Activated CD4-positive, alpha-beta memory T cell treated with anti-CD3 and anti-CD28 coated beads for 36 hours (primary cell): ENCODE measurements at regions of chr6 and their contacts with region 1.

Region 1: DNA sequence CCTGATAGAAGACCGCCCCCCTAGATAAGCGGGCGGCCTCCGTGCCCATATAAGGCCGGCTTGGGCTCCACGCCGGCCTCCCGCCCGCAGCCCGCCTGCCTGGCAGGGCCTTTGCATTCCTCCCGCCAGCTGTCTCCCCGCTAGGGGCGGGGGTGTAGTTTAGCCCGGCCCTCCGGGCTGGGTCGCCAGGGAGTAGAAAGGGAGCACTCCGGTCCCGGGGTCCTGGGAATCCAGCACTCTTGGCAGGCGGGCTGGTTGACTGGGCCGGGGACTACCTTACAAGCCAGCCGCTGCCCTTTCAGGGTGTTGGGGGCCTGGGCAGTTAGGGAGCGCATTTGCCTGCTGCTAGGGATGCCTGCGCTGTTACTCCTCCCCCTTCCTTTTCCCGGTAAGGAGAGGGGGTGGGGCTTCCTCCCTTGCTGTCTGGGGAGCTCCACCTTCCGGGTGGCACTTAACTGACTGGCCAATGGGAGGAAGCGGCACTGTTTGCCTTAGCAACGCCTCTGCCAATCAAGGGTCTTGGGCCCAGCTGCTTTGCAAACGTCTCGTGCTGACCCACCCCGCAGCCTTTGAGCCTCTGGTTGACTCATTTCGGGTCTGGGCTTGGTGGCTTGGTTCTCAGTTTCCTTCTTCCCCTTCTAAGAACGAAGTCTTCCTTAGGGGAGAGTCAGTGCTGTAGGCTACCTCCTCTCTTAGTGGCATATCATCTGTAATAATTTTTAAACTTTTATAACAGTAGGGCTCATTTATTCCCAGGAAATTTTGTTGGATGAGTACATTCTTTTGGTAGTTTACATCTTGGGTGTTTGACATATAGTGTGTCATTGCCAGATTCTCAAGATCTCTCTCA is 3.4 kb downstream of the SRF start:
- DNase-seq: peak; percentile 99
- H3K4me3 Mint-ChIP-seq: peak overlapping the region; percentile 99
- H3K27ac Mint-ChIP-seq: peak overlapping the region; percentile 89
- H3K4me1 Mint-ChIP-seq: peaks cover 43% of the 10 kb centered on the region
- H3K27me3 Mint-ChIP-seq: no peaks in the 10 kb centered on the region

Region 2: DNA sequence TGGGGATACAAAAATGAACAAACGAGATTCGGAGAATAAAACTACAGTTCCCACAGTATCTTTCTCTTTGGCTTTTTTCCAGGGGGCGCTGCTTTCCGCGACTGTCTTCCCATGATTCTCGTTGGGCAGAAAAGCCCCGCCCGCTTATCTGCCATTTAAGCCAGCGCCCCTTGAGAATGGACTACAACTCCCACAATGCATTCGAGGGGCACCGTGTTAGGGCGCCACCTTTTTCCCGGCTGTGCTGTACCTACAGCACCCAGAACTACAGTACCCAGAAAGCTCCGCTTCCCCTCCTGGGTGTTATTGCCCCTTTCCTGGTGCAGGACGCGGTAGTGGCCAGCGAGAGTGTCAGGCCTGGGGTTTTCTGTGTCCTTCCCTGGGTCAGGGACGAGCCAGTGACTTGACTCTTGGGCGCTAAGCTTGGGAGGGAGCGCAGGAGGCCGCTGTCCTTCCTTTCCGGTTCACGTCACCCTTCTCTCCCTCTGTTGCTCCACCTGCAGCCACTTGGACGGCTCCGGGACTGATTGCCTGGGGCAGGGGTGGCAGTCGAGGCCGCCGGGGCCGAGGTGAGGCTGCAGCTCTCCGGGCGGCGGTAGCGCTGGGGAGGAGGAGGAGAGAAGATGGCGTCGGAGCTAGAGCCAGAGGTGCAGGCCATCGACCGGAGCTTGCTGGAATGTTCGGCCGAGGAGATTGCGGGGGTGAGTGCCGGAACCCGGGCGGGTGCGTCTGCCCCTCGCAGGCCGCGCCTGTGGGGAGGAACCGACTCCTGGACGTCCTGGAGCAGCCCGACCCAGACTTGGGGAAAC is 610.6 kb before region 1 on chr6 and contains the start of gene UBR2:
- CTCF ChIA-PET with region 1: no interaction called
- POLR2A ChIA-PET with region 1: no interaction called
- intact Hi-C with region 1: loop called (anchors 5 kb)
- DNase-seq: peak; percentile 96
- H3K4me3 Mint-ChIP-seq: peak within 1 kb of the TSS; percentile 83
- H3K27ac Mint-ChIP-seq: peak within 1 kb of the TSS; percentile 91
- H3K4me1 Mint-ChIP-seq: peaks cover 25% of the 10 kb centered on the region
- H3K27me3 Mint-ChIP-seq: no peaks in the 10 kb centered on the region
- total RNA-seq, gene UBR2: 31.4 to 32.5 TPM

Region 3: DNA sequence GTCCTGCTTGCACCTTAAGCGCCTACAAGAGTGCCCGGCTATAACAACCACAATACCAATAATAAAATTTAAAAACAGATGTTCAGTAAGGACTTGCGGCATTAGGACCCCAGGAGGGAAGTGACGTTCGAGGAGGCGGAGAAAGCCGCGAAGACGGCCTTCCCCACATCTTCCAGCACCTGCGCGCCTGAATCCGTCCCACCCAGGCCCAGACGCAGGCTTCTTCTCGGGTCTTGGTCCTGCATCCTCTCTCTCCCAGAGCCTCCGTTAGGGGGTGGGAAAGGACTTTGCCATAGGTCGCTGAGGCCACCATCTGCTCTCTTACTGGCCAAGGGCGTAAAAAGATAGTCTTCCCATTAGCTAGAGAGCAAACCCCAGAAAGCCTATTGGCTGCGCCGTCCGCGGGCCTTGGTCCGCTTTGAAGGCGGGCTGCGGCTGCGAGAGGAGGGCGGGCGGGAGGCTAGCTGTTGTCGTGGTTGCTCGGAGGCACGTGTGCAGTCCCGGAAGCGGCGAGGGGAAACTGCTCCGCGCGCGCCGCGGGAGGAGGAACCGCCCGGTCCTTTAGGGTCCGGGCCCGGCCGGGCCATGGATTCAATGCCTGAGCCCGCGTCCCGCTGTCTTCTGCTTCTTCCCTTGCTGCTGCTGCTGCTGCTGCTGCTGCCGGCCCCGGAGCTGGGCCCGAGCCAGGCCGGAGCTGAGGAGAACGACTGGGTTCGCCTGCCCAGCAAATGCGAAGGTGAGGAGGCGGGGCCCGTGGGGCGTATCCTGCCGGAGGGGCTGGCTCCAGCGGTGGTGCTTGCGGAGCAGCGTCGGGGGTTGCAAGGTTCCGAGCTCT is 245.3 kb before region 1 on chr6 and contains the start of gene CNPY3:
- CTCF ChIA-PET with region 1: no interaction called
- POLR2A ChIA-PET with region 1: interaction called, 3 read pairs
- intact Hi-C with region 1: loop called (anchors 1 kb)
- DNase-seq: peak; percentile 98
- H3K4me3 Mint-ChIP-seq: peak within 1 kb of the TSS; percentile 96
- H3K27ac Mint-ChIP-seq: peak within 1 kb of the TSS; percentile 99
- H3K4me1 Mint-ChIP-seq: peaks cover 38% of the 10 kb centered on the region
- H3K27me3 Mint-ChIP-seq: no peaks in the 10 kb centered on the region
- total RNA-seq, gene CNPY3: 32.2 to 37.6 TPM

Region 4: DNA sequence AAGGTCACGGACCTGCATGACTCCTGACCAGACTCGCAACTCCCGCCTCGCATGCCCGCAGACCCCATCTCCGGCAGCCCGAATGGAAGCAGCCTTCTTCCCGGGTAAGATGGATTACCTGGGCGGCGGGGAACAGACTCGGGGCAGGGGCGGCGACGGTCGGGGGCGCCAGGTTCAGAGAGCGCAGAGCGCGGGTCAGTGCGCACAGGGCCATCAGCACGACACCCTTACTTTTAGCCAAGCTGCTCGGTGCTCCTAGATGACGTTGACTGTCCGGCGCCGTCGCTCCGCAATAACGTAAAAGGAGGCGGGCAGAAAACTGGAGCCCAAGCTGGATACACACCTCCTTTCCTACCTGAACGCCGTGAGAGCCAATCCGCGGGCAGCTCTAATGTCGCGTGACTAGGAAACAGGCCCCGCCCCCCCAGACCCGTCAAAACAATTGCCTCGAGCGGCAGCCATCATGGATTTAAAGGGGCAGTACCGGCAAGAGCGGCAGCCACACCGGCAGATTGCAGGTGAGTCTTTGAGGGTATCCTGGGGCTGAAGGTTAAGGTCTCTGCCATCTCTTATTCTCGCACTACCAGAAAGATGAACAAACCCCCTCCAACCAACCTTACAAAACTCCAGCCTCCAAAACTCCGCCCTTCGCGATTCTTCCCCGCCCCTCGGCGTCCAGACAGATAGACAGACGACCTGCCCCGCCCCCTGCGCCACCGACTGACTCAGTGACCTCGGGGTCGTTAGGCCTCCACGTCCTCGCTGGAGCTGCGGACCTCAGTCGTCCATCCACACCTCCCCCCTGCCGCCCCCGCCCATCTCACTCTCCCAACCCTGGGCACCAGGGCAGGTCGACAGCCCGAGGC is 115.1 kb before region 1 on chr6 and contains the starts of genes KLC4 and MRPL2:
- CTCF ChIA-PET with region 1: no interaction called
- POLR2A ChIA-PET with region 1: interaction called, 3 read pairs
- intact Hi-C with region 1: loop called (anchors 1 kb)
- DNase-seq: peak; percentile 100
- H3K4me3 Mint-ChIP-seq: peak within 1 kb of the TSS; percentile 89
- H3K27ac Mint-ChIP-seq: peak within 1 kb of the TSS; percentile 95
- H3K4me1 Mint-ChIP-seq: peaks cover 30% of the 10 kb centered on the region
- H3K27me3 Mint-ChIP-seq: no peaks in the 10 kb centered on the region
- total RNA-seq, gene KLC4: 11.0 to 11.9 TPM
- total RNA-seq, gene MRPL2: 91.0 to 95.4 TPM

Region 5: GRCh38 chr6:43105538-43106220 is 68.8 kb before region 1 on chr6:
- CTCF ChIA-PET with region 1: no interaction called
- POLR2A ChIA-PET with region 1: no interaction called
- intact Hi-C with region 1: no loop called
- DNase-seq: no peak
- H3K4me3 Mint-ChIP-seq: no peak overlapping the region
- H3K27ac Mint-ChIP-seq: no peak overlapping the region
- H3K4me1 Mint-ChIP-seq: no peaks in the 10 kb centered on the region
- H3K27me3 Mint-ChIP-seq: no peaks in the 10 kb centered on the region

Region 6: GRCh38 chr6:43247113-43247999 is 72.9 kb after region 1 on chr6:
- CTCF ChIA-PET with region 1: no interaction called
- POLR2A ChIA-PET with region 1: no interaction called
- intact Hi-C with region 1: loop called (anchors 1 kb)
- DNase-seq: peak; percentile 90
- H3K4me3 Mint-ChIP-seq: peak overlapping the region; percentile 79
- H3K27ac Mint-ChIP-seq: peak overlapping the region; percentile 80
- H3K4me1 Mint-ChIP-seq: peaks cover 18% of the 10 kb centered on the region
- H3K27me3 Mint-ChIP-seq: peaks cover 8% of the 10 kb centered on the region

Region 7: DNA sequence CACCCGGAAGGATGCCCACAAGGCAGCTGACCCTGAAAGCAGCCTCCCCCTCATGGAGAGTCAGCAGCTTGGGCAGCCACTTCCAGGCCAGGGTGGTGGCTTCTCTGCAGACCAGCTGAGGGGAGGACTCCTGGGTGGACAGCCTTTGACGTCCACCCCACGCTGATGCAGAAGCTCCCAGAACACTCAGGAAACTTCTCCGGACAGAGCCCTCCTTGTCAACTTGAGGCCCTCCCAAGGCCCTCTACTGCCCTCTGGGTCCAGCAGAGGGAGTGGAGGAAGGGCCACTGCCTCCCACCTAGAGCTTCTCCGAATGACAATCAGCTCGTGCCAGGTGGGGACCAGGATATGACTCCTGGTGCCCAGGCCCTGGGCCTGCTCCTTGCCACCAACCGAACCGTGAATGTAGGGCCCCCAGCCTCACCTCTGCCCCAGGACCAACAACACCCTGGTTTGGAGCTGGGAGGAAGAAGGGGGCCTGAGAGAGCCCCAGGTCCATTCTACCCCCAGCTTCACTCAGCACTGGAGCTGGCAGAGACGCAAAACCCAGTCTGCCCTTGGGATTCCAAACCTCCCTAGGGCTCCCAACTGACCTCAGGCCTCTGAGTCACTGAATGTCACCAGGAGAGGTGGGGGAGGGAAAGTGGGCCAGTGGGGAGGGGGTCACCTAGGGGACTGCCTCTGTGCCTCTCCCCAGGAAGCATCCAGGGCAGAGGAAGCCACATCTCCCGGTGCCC is 112.7 kb after region 1 on chr6:
- CTCF ChIA-PET with region 1: no interaction called
- POLR2A ChIA-PET with region 1: no interaction called
- intact Hi-C with region 1: no loop called
- DNase-seq: no peak
- H3K4me3 Mint-ChIP-seq: no peak overlapping the region
- H3K27ac Mint-ChIP-seq: no peak overlapping the region
- H3K4me1 Mint-ChIP-seq: no peaks in the 10 kb centered on the region
- H3K27me3 Mint-ChIP-seq: peaks cover 20% of the 10 kb centered on the region

Region 8: GRCh38 chr6:43477235-43478007 is 302.9 kb after region 1 on chr6 and contains the start of gene TJAP1:
- CTCF ChIA-PET with region 1: no interaction called
- POLR2A ChIA-PET with region 1: no interaction called
- intact Hi-C with region 1: loop called (anchors 1 kb)
- DNase-seq: peak; percentile 98
- H3K4me3 Mint-ChIP-seq: peak within 1 kb of the TSS; percentile 92
- H3K27ac Mint-ChIP-seq: peak within 1 kb of the TSS; percentile 87
- H3K4me1 Mint-ChIP-seq: peaks cover 48% of the 10 kb centered on the region
- H3K27me3 Mint-ChIP-seq: no peaks in the 10 kb centered on the region
- total RNA-seq, gene TJAP1: 30.5 to 36.2 TPM

Region 9: DNA sequence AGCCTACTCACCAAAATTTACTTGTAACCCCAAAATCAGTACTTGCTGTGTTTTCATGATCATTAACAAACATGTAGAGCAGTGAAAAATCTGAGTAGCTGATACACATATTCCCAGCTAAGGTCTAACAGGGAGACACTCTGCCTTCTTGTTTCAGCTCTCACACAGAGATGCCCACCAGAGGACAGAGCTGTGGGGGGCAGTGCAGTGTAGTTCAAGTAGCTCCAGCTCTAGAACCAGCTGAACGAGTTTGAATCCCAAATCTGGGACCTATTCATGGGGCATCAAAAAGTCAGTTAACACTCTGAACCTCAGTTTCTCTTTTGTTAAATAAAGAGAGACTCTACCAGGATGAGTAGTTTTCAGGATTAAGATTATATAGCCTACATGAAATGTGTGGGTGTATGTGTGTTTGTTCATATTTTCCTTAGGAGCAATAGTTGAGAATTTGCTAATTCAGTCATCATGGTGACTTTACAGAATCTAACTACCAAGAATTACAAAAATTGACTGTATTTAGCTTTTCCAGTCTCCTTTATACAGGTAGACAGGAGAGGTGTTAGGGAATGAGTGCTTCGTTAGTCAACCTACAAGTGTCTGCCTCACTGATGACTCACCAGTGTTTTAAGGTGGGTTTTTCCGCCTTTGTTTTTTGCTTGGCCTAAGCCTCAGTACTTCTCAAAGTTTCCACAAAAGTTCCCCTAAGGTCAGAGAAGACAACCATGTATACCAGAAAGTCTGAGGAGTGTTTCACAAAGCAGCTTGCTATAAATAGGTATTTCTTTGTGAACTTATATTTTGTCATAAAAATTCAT is 1989.7 kb after region 1 on chr6:
- CTCF ChIA-PET with region 1: no interaction called
- POLR2A ChIA-PET with region 1: no interaction called
- intact Hi-C with region 1: loop called (anchors 10 kb)
- DNase-seq: peak; percentile 60
- H3K4me3 Mint-ChIP-seq: peak overlapping the region; percentile 46
- H3K27ac Mint-ChIP-seq: peak overlapping the region; percentile 74
- H3K4me1 Mint-ChIP-seq: peaks cover 42% of the 10 kb centered on the region
- H3K27me3 Mint-ChIP-seq: no peaks in the 10 kb centered on the region